ENCODE measurements at regions of chr1 and their contacts with region 1.

Region 1: DNA sequence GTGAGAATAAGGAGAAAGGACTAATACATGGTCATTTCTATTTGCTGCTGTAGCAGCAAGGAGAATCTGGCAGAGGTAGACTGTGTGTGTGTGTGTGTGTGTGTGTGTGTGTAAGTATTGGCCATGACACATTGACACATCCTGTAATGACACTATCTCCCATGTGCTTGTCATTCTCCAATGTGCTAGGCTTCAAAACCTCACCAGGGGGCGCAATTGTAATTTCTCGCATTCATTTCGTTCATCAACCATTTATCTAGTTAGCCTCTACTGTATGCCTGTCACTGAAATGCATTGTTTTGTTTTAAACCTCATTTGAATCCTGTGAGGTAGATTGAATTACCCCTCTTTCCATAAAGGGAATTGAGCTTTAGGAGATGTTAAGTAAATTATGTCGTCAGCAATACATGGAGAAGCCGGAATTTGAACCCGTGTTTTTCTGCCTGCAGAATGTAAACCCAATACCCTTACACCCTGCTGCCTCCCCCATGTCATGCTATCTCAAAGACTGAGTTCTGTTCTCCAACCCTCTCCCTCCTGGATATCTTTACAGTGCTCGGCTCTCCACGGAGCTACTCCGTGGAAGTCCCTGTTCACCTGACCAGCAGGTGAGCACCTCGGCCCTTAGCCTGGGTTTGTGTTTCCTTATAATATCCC is 100.8 kb downstream of the UCK2 start:
- DNase-seq: peak in 5 of 10 donors; percentile 30 to 72 (median 57)
- H3K4me3 ChIP-seq: no peak overlapping the region
- H3K27ac ChIP-seq: no peak overlapping the region
- H3K27me3 ChIP-seq: no peaks in the 10 kb centered on the region
- CTCF ChIP-seq: peak; percentile 28 to 76 (median 60)

Region 2: GRCh38 chr1:166166695-166167571 is 238.7 kb after region 1 on chr1 and contains the start of gene FAM78B:
- intact Hi-C with region 1: loop called (anchors 5 to 10 kb)
- DNase-seq: peak; percentile 48 to 73 (median 60)
- H3K4me3 ChIP-seq: peak within 1 kb of the TSS; percentile 53 to 82 (median 72)
- H3K27ac ChIP-seq: peak within 1 kb of the TSS in 45 of 59 donors; percentile 15 to 82 (median 60)
- H3K27me3 ChIP-seq: peaks cover 0 to 3% (median 0%) of the 10 kb centered on the region in 45 donors
- CTCF ChIP-seq: peak in 13 of 56 donors; percentile 4 to 38 (median 14)
- total RNA-seq, gene FAM78B: 4.2 to 30.5 (median 19.3) TPM

Region 3: DNA sequence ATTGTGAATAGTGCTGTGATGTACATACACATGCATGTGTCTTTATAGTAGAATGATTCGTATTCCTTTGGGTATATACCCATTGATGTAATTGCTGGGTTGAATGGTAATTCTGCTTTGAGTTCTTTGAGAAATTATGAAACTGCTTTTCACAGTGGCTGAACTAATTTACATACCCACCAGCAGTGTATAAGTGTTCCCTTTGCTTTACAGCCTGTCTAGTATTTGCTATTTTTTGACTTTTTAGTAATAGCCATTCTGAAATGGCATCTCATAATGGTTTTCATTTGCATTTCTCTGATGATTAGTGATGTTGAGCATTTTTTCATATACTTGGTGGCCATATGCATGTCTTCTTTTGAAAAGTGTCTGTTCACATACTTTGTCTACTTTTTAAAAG is 293.1 kb after region 1 on chr1:
- intact Hi-C with region 1: no loop called
- DNase-seq: no peak
- H3K4me3 ChIP-seq: no peak overlapping the region
- H3K27ac ChIP-seq: no peak overlapping the region
- H3K27me3 ChIP-seq: no peaks in the 10 kb centered on the region
- CTCF ChIP-seq: no peak

Region 4: DNA sequence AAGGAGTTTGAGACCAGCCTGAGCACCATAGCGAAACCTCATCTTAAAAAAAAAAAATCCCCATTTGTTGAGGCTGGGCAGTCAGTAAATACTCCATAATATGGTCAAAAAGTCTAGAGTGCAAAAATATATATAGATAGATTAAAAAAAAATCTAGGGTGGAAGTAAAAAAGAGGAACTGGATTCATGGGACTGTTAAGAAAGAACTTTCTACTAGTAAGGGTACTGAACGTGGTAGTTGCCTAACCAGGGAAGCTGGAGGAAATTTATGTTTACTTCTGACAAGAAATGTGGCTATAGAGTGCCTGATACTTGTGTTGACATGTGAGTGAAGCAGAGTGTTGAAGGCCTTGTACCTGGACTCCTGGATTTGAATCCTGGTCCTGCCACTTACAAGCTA is 504.5 kb after region 1 on chr1:
- intact Hi-C with region 1: loop called in 1 of 2 experiments (anchors 5 kb)
- DNase-seq: no peak
- H3K4me3 ChIP-seq: no peak overlapping the region
- H3K27ac ChIP-seq: no peak overlapping the region
- H3K27me3 ChIP-seq: peaks cover 0 to 9% (median 0%) of the 10 kb centered on the region in 45 donors
- CTCF ChIP-seq: no peak

Region 5: DNA sequence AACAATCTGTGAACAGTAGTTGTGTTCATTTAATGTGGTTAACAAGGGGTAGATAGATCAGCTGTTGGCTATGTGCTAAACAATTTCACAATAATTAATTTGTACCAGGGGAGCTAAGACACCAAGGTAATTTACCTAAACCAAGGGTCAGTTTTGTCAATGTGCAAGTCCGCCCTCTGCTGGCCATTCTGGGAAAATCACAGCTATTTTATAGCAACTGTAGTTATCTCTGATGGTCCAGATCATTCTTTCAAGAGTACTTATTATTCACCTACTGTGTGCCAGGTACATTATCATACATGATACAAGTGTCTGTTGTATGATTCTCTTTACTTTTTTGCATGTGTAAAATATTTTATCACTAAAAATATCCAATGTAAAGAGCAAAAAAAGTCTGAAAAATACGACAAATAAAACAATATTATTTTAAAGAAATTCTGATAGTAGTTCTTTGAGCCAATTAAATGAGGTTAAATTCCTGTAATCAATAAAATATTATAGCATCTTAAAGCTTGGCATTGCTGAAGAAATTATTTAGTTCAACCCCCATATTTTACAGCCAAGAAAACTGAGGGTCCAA is 550.9 kb after region 1 on chr1:
- intact Hi-C with region 1: loop called (anchors 5 kb)
- DNase-seq: peak in 8 of 10 donors; percentile 23 to 77 (median 50)
- H3K4me3 ChIP-seq: no peak overlapping the region
- H3K27ac ChIP-seq: no peak overlapping the region
- H3K27me3 ChIP-seq: peaks cover 0 to 4% (median 0%) of the 10 kb centered on the region in 45 donors
- CTCF ChIP-seq: peak; percentile 65 to 93 (median 84)

Measured in dorsolateral prefrontal cortex (tissue), 120 donors.